ENCODE measurements at regions of chr1 and their contacts with region 1.

Region 1: DNA sequence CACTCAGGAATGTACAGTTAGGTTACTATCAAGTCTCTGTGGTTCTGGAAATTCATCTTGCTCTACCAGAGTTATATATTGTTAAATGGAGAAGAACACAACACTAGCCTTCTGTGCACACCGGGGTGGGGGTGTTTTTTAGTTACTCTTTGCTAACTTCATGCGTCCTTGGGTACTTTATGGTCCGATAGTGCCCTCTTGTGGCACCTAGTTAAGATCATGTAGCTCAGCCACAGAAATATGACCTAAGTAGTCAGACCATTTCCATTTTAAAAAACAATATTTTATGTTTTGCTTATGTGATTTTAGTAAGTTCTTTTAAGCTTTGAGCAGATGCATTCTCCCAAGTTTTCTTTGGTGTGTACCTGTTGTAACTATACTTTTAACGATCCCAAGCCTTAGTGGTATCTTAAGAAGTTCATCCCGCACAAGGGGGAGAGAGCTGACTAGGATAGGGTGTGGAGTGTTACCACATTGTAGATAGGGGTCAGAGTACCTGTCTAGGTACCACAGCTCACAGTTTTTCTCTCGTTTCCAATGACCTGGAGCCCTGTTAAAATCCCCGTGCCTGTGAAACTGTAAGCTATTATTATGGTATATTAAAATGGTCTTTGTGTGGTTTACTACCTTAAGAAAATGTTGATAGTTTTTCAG is 20.6 kb upstream of the SH3D21 start:
- DNase-seq: peak; percentile 69 to 95
- H3K4me3 ChIP-seq: no peak overlapping the region
- H3K27ac ChIP-seq: peak overlapping the region in 4 of 5 donors; percentile 13 to 57 (median 23)
- H3K4me1 ChIP-seq: peaks cover 5 to 59% (median 36%) of the 10 kb centered on the region in 4 donors
- H3K27me3 ChIP-seq: no peaks in the 10 kb centered on the region
- CTCF ChIP-seq: peak in 5 of 7 experiments; percentile 41 to 75 (median 69)
- EP300 ChIP-seq: no peak
- POLR2A ChIP-seq: no peak

Region 2: GRCh38 chr1:36223993-36224536 is 61.5 kb before region 1 on chr1 and contains the start of gene THRAP3:
- intact Hi-C with region 1: loop called (anchors 10 kb)
- DNase-seq: peak; percentile 100
- H3K4me3 ChIP-seq: peak within 1 kb of the TSS; percentile 74 to 91 (median 76)
- H3K27ac ChIP-seq: peak within 1 kb of the TSS; percentile 94 to 98 (median 96)
- H3K4me1 ChIP-seq: peaks cover 16 to 54% (median 38%) of the 10 kb centered on the region in 4 donors
- H3K27me3 ChIP-seq: no peaks in the 10 kb centered on the region
- CTCF ChIP-seq: no peak
- EP300 ChIP-seq: peak; percentile 73
- POLR2A ChIP-seq: peak in 2 of 4 donors; percentile 86 to 94
- total RNA-seq, gene THRAP3: 26.4 to 97.9 (median 61.3) TPM